Dendritic cell treated with granulocyte-macrophage colony-stimulating factor and Interleukin-4, amounts not matched to agents 40 ng/mL and 50 ng/mL, for 4 days (primary cell): ENCODE measurements at regions of chr19 and their contacts with region 1.

Region 1: GRCh38 chr19:1672038-1672768 is 19.8 kb upstream of the TCF3 start:
- H3K4me3 Mint-ChIP-seq: peak overlapping the region; percentile 53
- H3K27ac Mint-ChIP-seq: no peak overlapping the region
- H3K4me1 Mint-ChIP-seq: peaks cover 29% of the 10 kb centered on the region
- H3K27me3 Mint-ChIP-seq: peaks cover 77% of the 10 kb centered on the region

Region 2: DNA sequence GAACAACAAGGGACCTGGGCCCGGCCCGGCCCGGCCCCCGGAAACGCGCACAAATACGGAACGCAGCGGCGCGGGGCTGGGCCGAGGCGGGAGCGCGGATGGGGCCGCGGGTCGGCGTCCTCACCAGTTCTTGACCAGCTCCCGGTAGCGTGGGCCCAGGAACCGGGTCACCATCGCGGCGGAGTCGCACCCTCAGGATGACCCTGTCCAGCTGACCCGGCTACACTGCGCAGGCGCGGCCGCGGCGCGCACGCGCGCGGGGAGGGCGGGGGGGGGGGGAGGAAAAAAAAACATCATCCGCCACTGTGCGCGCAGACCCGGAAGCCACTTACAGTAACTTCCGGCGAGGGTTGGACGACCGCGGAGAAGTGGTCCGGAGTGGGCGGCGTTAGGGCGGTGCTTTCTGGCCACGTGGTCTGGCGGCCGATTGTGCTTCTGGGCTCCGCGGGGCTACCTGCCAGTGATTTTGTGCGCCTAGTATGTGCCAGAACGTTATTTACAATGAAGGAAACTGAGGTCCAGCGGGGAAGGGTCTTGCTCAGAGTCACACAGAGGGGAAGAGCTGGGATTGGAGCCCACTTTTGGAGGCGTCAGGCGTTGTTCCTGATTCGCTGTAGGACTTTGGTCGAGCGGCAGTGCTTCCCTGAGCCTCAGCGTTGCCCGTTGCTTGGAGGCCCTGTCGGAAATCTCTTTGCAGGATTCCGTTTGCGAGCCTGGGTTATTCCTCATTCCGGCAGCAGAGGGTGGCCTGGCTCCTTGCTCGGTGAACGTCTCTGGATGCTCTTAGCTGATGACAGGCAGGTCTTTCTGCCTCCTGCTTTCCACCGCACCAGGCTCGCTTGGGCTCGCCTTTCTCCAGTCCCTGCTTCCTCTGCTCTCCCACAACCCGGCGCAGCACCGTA is 66.7 kb before region 1 on chr19 and contains the start of gene UQCR11:
- intact Hi-C with region 1: loop called (anchors 5 kb)
- H3K4me3 Mint-ChIP-seq: peak within 1 kb of the TSS; percentile 97
- H3K27ac Mint-ChIP-seq: peak within 1 kb of the TSS; percentile 98
- H3K4me1 Mint-ChIP-seq: peaks cover 77% of the 10 kb centered on the region
- H3K27me3 Mint-ChIP-seq: peaks cover 12% of the 10 kb centered on the region

Region 3: DNA sequence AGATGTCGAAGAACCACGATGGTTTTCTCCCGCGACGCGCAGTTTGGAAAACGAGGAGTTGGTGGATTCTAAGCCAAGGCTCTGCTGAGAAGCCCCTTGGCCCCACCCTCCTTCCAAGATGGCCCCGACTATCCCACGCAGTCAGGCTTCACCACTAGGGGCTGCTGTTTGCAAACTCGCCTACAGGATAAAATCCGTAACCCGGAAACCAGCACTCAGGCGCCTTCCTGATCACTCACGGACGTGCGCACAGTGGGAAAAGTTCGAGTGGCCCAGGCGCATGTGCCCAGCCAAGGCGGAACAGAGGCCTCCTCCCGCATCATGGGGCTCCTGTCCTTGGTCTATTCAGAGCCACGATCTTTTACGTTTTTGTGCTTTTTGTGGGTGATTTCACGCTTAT is 47.7 kb before region 1 on chr19:
- intact Hi-C with region 1: loop called (anchors 2 kb)
- H3K4me3 Mint-ChIP-seq: no peak overlapping the region
- H3K27ac Mint-ChIP-seq: no peak overlapping the region
- H3K4me1 Mint-ChIP-seq: peaks cover 6% of the 10 kb centered on the region
- H3K27me3 Mint-ChIP-seq: no peaks in the 10 kb centered on the region

Region 4: DNA sequence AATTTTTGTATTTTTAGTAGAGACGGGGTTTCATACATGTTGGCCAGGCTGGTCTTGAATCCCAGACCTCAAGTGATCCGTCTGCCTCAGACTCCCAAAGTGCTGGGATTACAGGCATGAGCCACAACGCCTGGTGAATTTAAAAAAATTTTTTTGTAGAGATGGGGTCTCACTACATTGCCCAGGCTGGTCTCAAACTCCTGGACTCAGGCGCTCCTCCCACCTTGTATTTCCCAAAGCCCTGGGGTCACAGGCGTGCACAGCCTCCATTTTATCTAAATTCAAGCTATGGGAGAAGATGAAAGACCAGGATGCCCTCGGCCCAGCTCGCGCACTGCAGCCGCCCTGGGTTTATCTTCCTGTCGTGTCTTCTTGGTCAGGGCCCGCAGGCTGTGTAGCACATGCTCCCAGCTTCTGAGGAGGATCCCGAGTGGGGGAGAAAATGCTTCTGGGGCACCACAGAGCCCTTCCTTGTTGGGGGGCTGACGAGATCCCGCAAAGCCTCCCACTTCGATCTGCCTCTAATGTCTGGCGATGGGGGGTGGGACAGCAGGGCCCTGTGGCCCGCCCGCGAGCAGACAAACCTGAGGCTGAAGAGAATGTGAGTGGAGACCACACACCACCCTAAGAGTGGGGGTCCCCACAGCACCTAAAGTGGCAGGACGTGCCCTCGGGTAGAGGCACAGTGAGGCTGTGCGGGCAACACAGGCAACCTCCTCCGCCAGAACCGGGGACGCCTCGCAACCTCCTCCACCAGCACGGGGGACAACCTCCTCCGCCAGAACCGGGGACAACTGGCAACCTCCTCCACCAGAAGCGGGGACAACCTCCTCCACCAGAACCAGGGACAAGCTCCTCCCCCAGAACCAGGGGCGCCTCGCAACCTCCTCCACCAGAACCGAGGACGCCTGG is 35.6 kb before region 1 on chr19:
- intact Hi-C with region 1: no loop called
- H3K4me3 Mint-ChIP-seq: no peak overlapping the region
- H3K27ac Mint-ChIP-seq: no peak overlapping the region
- H3K4me1 Mint-ChIP-seq: peaks cover 16% of the 10 kb centered on the region
- H3K27me3 Mint-ChIP-seq: no peaks in the 10 kb centered on the region

Region 5: GRCh38 chr19:1652471-1653299 is 19.5 kb before region 1 on chr19 and contains the start of gene TCF3:
- intact Hi-C with region 1: loop called (anchors 2 kb)
- H3K4me3 Mint-ChIP-seq: peak within 1 kb of the TSS; percentile 82
- H3K27ac Mint-ChIP-seq: peak within 1 kb of the TSS; percentile 97
- H3K4me1 Mint-ChIP-seq: peaks cover 52% of the 10 kb centered on the region
- H3K27me3 Mint-ChIP-seq: peaks cover 2% of the 10 kb centered on the region

Region 6: DNA sequence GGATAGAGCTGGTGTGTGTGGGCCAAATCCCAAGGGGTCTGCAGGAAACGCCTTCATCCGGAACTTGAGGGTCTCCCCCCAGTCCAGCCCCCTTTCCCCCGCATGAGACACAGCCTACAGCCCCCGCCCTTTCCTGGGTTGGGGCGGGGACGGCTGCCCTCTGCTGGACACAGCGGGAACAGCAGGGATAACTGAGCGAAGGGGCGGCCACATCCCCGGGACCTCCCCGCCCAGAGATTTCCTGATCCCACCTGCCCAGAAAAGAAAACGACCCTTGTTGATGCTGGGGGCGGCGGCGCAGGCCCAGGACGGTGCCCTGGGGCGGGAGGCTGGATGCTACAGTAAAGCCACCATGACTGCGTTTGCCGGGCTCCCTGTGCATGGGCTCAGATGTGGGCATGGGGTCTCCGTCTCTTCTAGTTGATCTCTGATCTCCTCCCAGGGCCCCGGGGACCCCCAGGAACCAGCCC is 95.3 kb after region 1 on chr19:
- intact Hi-C with region 1: loop called (anchors 2 kb)
- H3K4me3 Mint-ChIP-seq: no peak overlapping the region
- H3K27ac Mint-ChIP-seq: no peak overlapping the region
- H3K4me1 Mint-ChIP-seq: peaks cover 13% of the 10 kb centered on the region
- H3K27me3 Mint-ChIP-seq: peaks cover 98% of the 10 kb centered on the region